PC-3 (cell line): ENCODE measurements at regions of chr1 and their contacts with region 1.

Region 1: DNA sequence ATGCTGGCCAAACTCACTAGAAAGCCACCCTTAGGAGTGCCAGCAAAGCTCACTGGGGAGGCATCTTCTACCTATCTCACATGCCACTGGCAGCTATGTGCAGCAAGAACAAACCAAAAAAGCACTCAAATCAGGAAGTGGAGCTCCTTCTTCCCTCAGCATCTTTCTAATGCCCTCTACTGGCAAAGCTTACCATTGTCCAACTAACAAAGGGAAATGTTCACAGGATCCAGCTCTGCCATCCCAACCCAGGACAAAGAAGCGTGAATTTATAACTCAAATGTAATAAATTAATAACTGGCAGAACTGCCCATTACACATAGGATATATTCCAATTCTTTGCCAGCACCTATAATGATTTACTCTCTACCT is 38.9 kb downstream of the LEPR start:
- DNase-seq: peak; percentile 65
- ATAC-seq: peak; percentile 74
- H3K4me3 ChIP-seq: no peak overlapping the region
- H3K27ac ChIP-seq: no peak overlapping the region
- H3K4me1 ChIP-seq: no peaks in the 10 kb centered on the region
- H3K27me3 ChIP-seq: no peaks in the 10 kb centered on the region
- CTCF ChIP-seq: peak; percentile 79

Region 2: GRCh38 chr1:65059930-65060538 is 399.3 kb before region 1 on chr1:
- CTCF ChIA-PET with region 1: no interaction called
- POLR2A ChIA-PET with region 1: no interaction called
- intact Hi-C with region 1: loop called (anchors 5 kb)
- DNase-seq: peak; percentile 67
- ATAC-seq: no peak
- H3K4me3 ChIP-seq: no peak overlapping the region
- H3K27ac ChIP-seq: no peak overlapping the region
- H3K4me1 ChIP-seq: no peaks in the 10 kb centered on the region
- H3K27me3 ChIP-seq: no peaks in the 10 kb centered on the region
- CTCF ChIP-seq: peak; percentile 73

Region 3: DNA sequence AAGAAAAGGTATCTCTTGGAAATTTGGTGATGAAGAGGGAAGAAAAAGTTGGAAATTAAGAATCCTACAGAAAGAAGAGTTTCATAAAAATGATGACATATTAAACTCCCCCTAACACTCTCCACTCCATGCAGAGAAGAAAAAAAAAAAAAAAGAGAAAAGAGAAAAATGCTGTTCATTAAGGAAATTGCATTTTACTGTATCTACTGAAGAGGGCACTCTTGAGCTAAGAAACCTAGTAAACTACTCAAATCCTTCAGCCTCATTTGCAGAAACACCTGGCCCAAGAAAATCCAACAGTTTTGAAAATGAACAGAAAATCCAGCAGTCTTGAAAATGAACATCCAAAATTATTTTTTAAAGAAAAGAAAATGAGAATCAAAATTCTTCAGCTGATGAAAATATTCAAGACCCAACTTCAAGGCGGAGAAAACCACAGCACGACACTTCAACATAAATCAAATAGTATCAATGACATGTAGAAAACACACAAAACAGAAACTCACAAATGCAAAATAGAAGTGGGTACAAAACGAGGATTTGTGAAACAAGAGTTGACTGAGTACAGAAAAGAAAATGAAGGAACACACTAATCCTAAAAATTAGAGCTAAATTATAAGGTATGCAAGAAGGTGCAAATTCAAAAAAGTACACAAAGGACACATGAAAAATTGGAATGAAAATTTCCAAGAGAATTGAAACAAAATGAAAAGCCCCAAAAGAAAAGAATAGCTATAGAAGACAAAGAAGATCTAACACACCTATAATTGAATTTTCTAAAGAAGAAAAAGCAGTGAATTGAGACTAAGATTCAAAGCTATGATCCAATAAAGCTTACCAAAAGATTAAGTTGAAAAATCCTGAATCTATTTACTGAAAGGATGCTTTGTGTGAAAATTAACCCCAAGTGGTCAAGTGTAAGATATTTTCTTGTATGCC is 223.2 kb before region 1 on chr1:
- CTCF ChIA-PET with region 1: interaction called, 7 read pairs
- POLR2A ChIA-PET with region 1: interaction called, 7 read pairs
- intact Hi-C with region 1: loop called (anchors 5 kb)
- DNase-seq: peak; percentile 72
- ATAC-seq: no peak
- H3K4me3 ChIP-seq: no peak overlapping the region
- H3K27ac ChIP-seq: no peak overlapping the region
- H3K4me1 ChIP-seq: no peaks in the 10 kb centered on the region
- H3K27me3 ChIP-seq: no peaks in the 10 kb centered on the region
- CTCF ChIP-seq: peak; percentile 80

Region 4: DNA sequence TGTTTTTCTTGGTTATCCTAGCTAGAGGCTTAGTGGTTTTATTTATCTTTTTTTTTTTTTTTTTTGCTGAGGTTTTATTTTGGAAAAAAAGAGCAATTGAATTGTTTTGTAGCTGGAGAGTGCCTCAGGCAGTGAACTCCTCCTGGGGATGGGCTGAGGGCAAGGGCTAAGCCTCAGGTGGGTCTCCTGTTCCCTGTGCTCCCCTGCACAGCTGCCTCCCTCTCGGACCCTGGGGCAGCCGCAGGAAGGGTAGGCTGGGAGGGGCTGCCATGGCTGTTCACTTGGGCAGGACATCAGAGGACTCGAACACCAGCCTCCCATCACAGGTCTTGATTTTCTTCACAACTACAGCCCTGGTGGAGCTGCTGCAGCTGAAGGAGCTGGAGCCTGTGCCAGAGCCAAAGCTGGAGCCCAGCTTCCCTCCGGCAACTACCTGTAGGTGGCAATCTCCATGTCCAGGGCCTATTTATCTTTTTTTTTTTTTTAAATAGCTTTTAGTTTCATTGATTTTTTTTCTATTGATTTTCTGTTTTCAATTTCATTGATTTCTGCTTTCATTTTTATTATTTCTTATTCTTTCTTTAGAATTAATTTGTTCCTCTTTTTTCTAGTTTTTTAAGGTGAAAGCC is 10.1 kb before region 1 on chr1:
- CTCF ChIA-PET with region 1: interaction called, 13 read pairs
- POLR2A ChIA-PET with region 1: no interaction called
- intact Hi-C with region 1: no loop called
- DNase-seq: peak; percentile 21
- ATAC-seq: peak; percentile 49; the same call in 1 of the 2 replicates
- H3K4me3 ChIP-seq: no peak overlapping the region
- H3K27ac ChIP-seq: no peak overlapping the region
- H3K4me1 ChIP-seq: no peaks in the 10 kb centered on the region
- H3K27me3 ChIP-seq: peaks cover 5% of the 10 kb centered on the region; the same call in 1 of the 2 replicates
- CTCF ChIP-seq: peak; percentile 47